Activated T-helper 1 cell treated with anti-CD3 and anti-CD28 coated beads, Interleukin-12 subunit alpha, Interleukin-12 subunit beta, Interleukin-2, Interleukin-4 antibody, amounts not matched to agents 30 ng/mL and 10 ng/mL and 1 ng/mL, durations not matched to agents 14 hours and 24 hours and 36 hours (primary cell): ENCODE measurements at regions of chr6 and their contacts with region 1.

Region 1: GRCh38 chr6:89638320-89639195 is at the start of gene LYRM2:
- DNase-seq: peak; percentile 89
- H3K4me3 Mint-ChIP-seq: peak within 1 kb of the TSS; percentile 94
- H3K27ac Mint-ChIP-seq: peak within 1 kb of the TSS; percentile 96
- H3K4me1 Mint-ChIP-seq: peaks cover 29% of the 10 kb centered on the region
- H3K27me3 Mint-ChIP-seq: no peaks in the 10 kb centered on the region
- total RNA-seq, gene LYRM2: 32.8 and 34.7 TPM in 2 replicates

Region 2: GRCh38 chr6:88963139-88964090 is 675.1 kb before region 1 on chr6 and contains the start of gene RNGTT:
- intact Hi-C with region 1: loop called (anchors 1 kb)
- DNase-seq: peak; percentile 97
- H3K4me3 Mint-ChIP-seq: peak within 1 kb of the TSS; percentile 98
- H3K27ac Mint-ChIP-seq: peak within 1 kb of the TSS; percentile 84
- H3K4me1 Mint-ChIP-seq: peaks cover 33% of the 10 kb centered on the region
- H3K27me3 Mint-ChIP-seq: peaks cover 7% of the 10 kb centered on the region
- total RNA-seq, gene RNGTT: 21.6 and 25.3 TPM in 2 replicates

Region 3: DNA sequence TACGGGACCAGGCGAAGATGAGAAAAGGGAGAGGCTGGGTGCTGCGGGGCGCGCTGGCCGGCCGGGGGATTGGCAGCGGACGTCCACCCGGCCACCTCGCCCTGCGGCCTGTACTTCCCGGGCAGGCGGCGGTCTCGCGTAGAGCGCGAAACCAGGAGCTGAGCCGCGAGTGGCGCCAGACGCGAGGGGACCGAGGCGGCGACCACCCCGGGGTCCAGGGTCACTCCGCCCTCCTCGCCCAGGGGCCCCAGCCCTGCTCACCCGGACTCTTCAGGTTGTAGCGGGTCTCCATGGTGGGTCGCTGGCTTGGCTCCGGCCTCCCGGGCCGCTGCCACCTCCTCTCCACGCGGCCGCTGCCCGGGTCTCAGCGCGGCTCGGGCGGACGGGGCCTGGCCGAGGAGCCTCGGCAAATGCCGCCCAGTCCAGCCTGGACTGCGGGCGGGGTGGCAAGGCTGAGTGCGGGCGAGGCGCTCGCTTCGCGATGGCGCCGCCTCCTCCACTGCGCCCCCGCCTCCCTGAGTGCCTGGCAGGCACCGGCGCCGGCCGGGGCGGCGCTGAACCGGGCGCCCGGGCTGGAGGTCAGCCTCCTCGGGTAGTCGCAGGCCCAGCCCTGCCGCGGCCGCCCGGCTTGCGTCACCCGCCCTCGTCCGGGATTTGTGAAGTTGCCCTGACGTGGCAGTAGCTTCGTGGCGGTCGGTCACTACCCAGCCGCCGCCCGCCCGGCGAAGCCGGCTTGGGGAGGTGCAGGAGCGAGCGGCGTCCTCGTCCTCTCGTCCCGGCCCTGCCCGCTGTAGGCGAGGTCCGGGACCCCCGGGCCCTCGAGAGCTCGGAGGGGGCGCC is 286.1 kb before region 1 on chr6 and contains the start of gene UBE2J1:
- intact Hi-C with region 1: loop called (anchors 5 kb)
- DNase-seq: peak; percentile 75
- H3K4me3 Mint-ChIP-seq: peak within 1 kb of the TSS; percentile 96
- H3K27ac Mint-ChIP-seq: peak within 1 kb of the TSS; percentile 96
- H3K4me1 Mint-ChIP-seq: peaks cover 82% of the 10 kb centered on the region
- H3K27me3 Mint-ChIP-seq: no peaks in the 10 kb centered on the region
- total RNA-seq, gene UBE2J1: 38.1 and 40.5 TPM in 2 replicates

Region 4: GRCh38 chr6:89432875-89433251 is 205.7 kb before region 1 on chr6 and contains the start of gene ANKRD6:
- intact Hi-C with region 1: loop called (anchors 1 kb)
- DNase-seq: peak; percentile 80
- H3K4me3 Mint-ChIP-seq: peak within 1 kb of the TSS; percentile 87
- H3K27ac Mint-ChIP-seq: peak within 1 kb of the TSS; percentile 70
- H3K4me1 Mint-ChIP-seq: peaks cover 18% of the 10 kb centered on the region
- H3K27me3 Mint-ChIP-seq: peaks cover 32% of the 10 kb centered on the region
- total RNA-seq, gene ANKRD6: 1.3 and 2.3 TPM in 2 replicates

Region 5: GRCh38 chr6:89819336-89820130 is 181.0 kb after region 1 on chr6 and contains the start of gene MDN1:
- intact Hi-C with region 1: loop called (anchors 1 kb)
- DNase-seq: peak; percentile 89
- H3K4me3 Mint-ChIP-seq: peak within 1 kb of the TSS; percentile 87
- H3K27ac Mint-ChIP-seq: peak within 1 kb of the TSS; percentile 97
- H3K4me1 Mint-ChIP-seq: peaks cover 33% of the 10 kb centered on the region
- H3K27me3 Mint-ChIP-seq: no peaks in the 10 kb centered on the region
- total RNA-seq, gene MDN1: 74.6 and 77.9 TPM in 2 replicates

Region 6: DNA sequence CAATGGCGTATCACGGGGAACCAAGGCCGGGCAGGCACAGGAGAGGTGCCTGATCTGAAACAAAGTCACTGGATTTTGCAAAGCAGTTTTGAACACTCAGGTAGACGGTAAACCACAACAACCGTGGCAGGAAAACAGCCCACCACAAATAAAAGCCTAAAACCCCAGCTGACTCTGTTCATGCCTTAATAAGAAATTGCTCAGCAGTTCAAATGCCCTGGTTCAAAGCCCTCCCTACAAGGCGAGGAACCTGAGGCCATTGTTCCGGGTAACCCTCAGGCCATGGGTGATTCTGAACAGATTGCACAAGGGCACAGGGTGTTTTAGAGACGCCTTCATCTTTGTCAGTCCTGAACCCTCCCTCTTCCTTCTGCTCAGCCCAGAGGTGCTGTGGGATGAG is 834.2 kb after region 1 on chr6:
- intact Hi-C with region 1: loop called (anchors 5 kb)
- DNase-seq: peak; percentile 52
- H3K4me3 Mint-ChIP-seq: peak overlapping the region; percentile 68
- H3K27ac Mint-ChIP-seq: peak overlapping the region; percentile 92
- H3K4me1 Mint-ChIP-seq: peaks cover 100% of the 10 kb centered on the region
- H3K27me3 Mint-ChIP-seq: no peaks in the 10 kb centered on the region